CD8-positive, alpha-beta T cell (primary cell): ENCODE measurements at regions of chr2 and their contacts with region 1.

Region 1: GRCh38 chr2:234488913-234489451 is 7.9 kb downstream of the ARL4C start:
- DNase-seq: peak; percentile 43 to 95 (median 77)
- ATAC-seq: peak; percentile 76
- H3K4me3 ChIP-seq: peak overlapping the region; percentile 6 to 32
- H3K4me3 Mint-ChIP-seq: peak overlapping the region; percentile 85
- H3K27ac ChIP-seq: peak overlapping the region; percentile 70 to 89
- H3K27ac Mint-ChIP-seq: peak overlapping the region; percentile 98
- H3K4me1 ChIP-seq: peaks cover 82% of the 10 kb centered on the region
- H3K4me1 Mint-ChIP-seq: peaks cover 89% of the 10 kb centered on the region
- H3K27me3 ChIP-seq: no peaks in the 10 kb centered on the region
- H3K27me3 Mint-ChIP-seq: no peaks in the 10 kb centered on the region
- CTCF ChIP-seq: no peak

Region 2: DNA sequence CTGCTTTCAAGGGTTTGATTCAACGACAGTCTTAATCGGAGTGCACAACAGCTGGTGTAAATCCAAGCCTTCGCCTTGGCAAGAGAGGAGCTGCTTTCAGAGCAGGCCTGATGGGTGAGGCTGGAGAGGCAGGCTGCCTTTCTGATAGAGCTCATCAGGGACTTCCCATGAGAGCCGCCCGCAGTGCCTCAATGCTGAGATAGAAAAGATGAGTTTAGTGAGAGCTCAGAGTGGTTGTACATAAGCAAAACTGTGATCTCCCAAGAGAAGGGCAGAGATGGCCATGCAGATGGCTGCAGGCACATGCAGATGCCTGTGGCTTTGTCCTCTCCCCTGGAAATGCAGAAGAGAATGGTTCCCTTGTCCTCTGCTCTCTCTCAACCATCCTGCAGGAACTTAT is 114.2 kb before region 1 on chr2:
- CTCF ChIA-PET with region 1: no interaction called
- POLR2A ChIA-PET with region 1: no interaction called
- intact Hi-C with region 1: loop called in 1 of 2 experiments (anchors 2 kb)
- DNase-seq: no peak
- ATAC-seq: no peak
- H3K4me3 ChIP-seq: no peak overlapping the region
- H3K4me3 Mint-ChIP-seq: no peak overlapping the region
- H3K27ac ChIP-seq: no peak overlapping the region
- H3K27ac Mint-ChIP-seq: no peak overlapping the region
- H3K4me1 ChIP-seq: peaks cover 42% of the 10 kb centered on the region
- H3K4me1 Mint-ChIP-seq: peaks cover 51% of the 10 kb centered on the region
- H3K27me3 ChIP-seq: no peaks in the 10 kb centered on the region
- H3K27me3 Mint-ChIP-seq: no peaks in the 10 kb centered on the region
- CTCF ChIP-seq: no peak

Region 3: GRCh38 chr2:234446404-234447076 is 42.4 kb before region 1 on chr2:
- CTCF ChIA-PET with region 1: interaction called, 6 read pairs
- POLR2A ChIA-PET with region 1: interaction called, 102 read pairs
- intact Hi-C with region 1: no loop called
- DNase-seq: peak; percentile 63 to 97 (median 81)
- ATAC-seq: peak; percentile 84
- H3K4me3 ChIP-seq: no peak overlapping the region
- H3K4me3 Mint-ChIP-seq: peak overlapping the region; percentile 70
- H3K27ac ChIP-seq: peak overlapping the region; percentile 90 to 94
- H3K27ac Mint-ChIP-seq: peak overlapping the region; percentile 98
- H3K4me1 ChIP-seq: peaks cover 82% of the 10 kb centered on the region
- H3K4me1 Mint-ChIP-seq: peaks cover 84% of the 10 kb centered on the region
- H3K27me3 ChIP-seq: no peaks in the 10 kb centered on the region
- H3K27me3 Mint-ChIP-seq: no peaks in the 10 kb centered on the region
- CTCF ChIP-seq: no peak

Region 4: DNA sequence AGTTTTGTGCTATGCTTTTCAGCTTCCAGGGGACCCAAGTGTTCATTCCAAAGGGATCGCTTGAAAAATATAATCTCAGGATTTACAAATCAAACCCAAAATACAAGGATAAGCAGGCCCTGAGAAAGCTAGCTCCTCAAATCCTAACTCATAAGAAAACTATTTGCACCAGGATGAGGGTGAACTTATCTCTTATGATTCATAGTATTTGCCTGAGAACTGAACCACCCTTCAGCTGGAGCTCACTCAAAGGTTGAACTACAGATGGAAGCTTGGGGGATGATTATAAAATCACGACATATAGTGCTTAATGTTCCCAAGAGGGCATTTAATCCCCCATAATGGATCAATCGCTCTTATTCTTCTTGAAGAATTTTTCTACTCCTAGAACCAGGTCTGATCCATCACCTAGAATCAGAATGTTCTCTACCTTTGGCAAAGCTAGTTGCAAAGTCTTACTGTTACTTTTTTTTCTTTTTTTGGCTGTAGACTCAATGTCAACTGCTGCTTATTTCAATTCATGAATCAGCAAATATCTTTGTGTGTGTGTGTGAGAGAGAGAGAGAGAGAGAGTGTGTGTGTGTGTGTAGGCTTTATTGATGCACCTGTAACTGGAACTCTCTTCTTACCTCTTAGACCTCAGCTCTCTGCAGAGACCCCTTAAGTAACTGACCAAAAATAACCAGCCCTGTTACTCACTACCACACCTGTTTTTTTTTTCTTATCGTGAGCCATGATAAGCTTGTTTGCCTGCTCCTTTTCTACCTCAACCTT is 36.9 kb before region 1 on chr2:
- CTCF ChIA-PET with region 1: interaction called, 18 read pairs
- POLR2A ChIA-PET with region 1: interaction called, 102 read pairs
- intact Hi-C with region 1: loop called (anchors 2 kb)
- DNase-seq: peak in 2 of 9 experiments; percentile 29 to 55
- ATAC-seq: peak; percentile 14
- H3K4me3 ChIP-seq: peak overlapping the region; percentile 42 to 81
- H3K4me3 Mint-ChIP-seq: peak overlapping the region; percentile 83
- H3K27ac ChIP-seq: peak overlapping the region; percentile 55 to 91
- H3K27ac Mint-ChIP-seq: peak overlapping the region; percentile 91
- H3K4me1 ChIP-seq: peaks cover 73% of the 10 kb centered on the region
- H3K4me1 Mint-ChIP-seq: peaks cover 79% of the 10 kb centered on the region
- H3K27me3 ChIP-seq: no peaks in the 10 kb centered on the region
- H3K27me3 Mint-ChIP-seq: no peaks in the 10 kb centered on the region
- CTCF ChIP-seq: no peak

Region 5: GRCh38 chr2:234463626-234464290 is 25.2 kb before region 1 on chr2:
- CTCF ChIA-PET with region 1: interaction called, 9 read pairs
- POLR2A ChIA-PET with region 1: interaction called, 15 read pairs
- intact Hi-C with region 1: loop called (anchors 1 kb)
- DNase-seq: peak; percentile 58 to 92 (median 75)
- ATAC-seq: peak; percentile 87
- H3K4me3 ChIP-seq: peak overlapping the region; percentile 9 to 36
- H3K4me3 Mint-ChIP-seq: peak overlapping the region; percentile 50
- H3K27ac ChIP-seq: peak overlapping the region; percentile 85 to 94
- H3K27ac Mint-ChIP-seq: peak overlapping the region; percentile 94
- H3K4me1 ChIP-seq: peaks cover 63% of the 10 kb centered on the region
- H3K4me1 Mint-ChIP-seq: peaks cover 67% of the 10 kb centered on the region
- H3K27me3 ChIP-seq: no peaks in the 10 kb centered on the region
- H3K27me3 Mint-ChIP-seq: no peaks in the 10 kb centered on the region
- CTCF ChIP-seq: no peak